Activated naive CD4-positive, alpha-beta T cell treated with anti-CD3 and anti-CD28 coated beads for 36 hours (primary cell): ENCODE measurements at regions of chr1 and their contacts with region 1.

Region 1: DNA sequence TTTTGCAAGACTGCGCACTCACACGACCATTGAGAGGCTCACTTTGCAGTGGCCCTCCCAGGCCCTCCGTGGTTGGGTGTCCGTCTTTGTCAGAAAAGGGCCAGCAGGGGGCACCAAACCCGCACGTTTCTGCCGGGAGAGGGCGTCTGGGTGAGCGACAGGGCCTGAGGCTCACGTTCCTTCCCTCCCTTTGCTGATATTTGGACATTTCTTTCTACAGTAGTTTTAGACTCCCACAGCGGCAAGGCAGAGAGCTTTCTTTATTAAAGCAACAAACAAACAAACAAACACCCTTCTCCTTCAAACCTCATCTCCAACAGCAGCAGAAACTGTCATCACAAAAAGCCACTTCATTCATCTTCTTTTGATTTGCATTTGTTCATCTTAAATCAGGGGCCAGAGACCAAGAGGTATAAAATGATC is 79.2 kb upstream of the WDR26 start:
- DNase-seq: peak; percentile 94
- H3K4me3 Mint-ChIP-seq: no peak overlapping the region
- H3K27ac Mint-ChIP-seq: no peak overlapping the region
- H3K4me1 Mint-ChIP-seq: no peaks in the 10 kb centered on the region
- H3K27me3 Mint-ChIP-seq: no peaks in the 10 kb centered on the region

Region 2: GRCh38 chr1:224392411-224393249 is 121.2 kb before region 1 on chr1:
- CTCF ChIA-PET with region 1: no interaction called
- intact Hi-C with region 1: no loop called
- DNase-seq: no peak
- H3K4me3 Mint-ChIP-seq: no peak overlapping the region
- H3K27ac Mint-ChIP-seq: peak overlapping the region; percentile 51
- H3K4me1 Mint-ChIP-seq: peaks cover 27% of the 10 kb centered on the region
- H3K27me3 Mint-ChIP-seq: no peaks in the 10 kb centered on the region

Region 3: GRCh38 chr1:224503161-224504118 is 10.4 kb before region 1 on chr1:
- CTCF ChIA-PET with region 1: interaction called, 38 read pairs
- intact Hi-C with region 1: no loop called
- DNase-seq: peak; percentile 33
- H3K4me3 Mint-ChIP-seq: no peak overlapping the region
- H3K27ac Mint-ChIP-seq: no peak overlapping the region
- H3K4me1 Mint-ChIP-seq: peaks cover 30% of the 10 kb centered on the region
- H3K27me3 Mint-ChIP-seq: peaks cover 7% of the 10 kb centered on the region

Region 4: GRCh38 chr1:224623743-224624333 is 110.0 kb after region 1 on chr1:
- CTCF ChIA-PET with region 1: interaction called, 3 read pairs
- intact Hi-C with region 1: loop called (anchors 5 kb)
- DNase-seq: peak; percentile 92
- H3K4me3 Mint-ChIP-seq: peak overlapping the region; percentile 46
- H3K27ac Mint-ChIP-seq: peak overlapping the region; percentile 82
- H3K4me1 Mint-ChIP-seq: peaks cover 23% of the 10 kb centered on the region
- H3K27me3 Mint-ChIP-seq: peaks cover 25% of the 10 kb centered on the region

Region 5: DNA sequence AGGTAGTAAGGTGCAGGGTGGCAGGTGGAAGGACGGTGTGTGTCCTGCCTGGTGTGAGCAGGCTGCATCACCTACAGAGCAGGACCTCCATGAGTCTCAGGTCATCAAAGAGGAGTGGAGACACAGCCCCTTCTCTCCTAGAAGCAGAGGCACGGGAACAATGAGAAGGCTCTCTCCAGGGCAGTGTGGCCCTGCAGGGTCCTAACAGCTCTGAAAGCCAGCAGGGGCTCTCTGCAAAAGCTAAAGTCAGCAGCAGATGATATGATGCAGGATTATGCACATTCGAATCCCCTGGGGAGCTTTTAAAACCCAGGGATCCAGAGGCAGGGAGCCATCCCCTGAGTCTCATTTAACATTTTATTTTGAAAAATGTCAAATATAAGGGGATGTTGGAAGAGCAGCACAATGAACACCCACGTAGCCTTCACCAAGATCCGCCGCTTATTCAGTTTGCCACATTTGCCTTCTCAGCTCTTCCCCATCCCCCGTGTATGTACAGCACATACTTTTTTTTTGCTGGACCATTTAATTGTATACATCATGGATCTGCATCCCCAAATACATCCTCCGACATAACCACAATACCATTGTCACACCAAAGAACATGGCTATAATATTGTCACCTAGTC is 190.4 kb after region 1 on chr1:
- CTCF ChIA-PET with region 1: no interaction called
- intact Hi-C with region 1: no loop called
- DNase-seq: no peak
- H3K4me3 Mint-ChIP-seq: no peak overlapping the region
- H3K27ac Mint-ChIP-seq: no peak overlapping the region
- H3K4me1 Mint-ChIP-seq: no peaks in the 10 kb centered on the region
- H3K27me3 Mint-ChIP-seq: no peaks in the 10 kb centered on the region

Region 6: GRCh38 chr1:224851210-224851847 is 337.5 kb after region 1 on chr1:
- CTCF ChIA-PET with region 1: interaction called, 63 read pairs
- intact Hi-C with region 1: loop called (anchors 1 kb)
- DNase-seq: peak; percentile 74
- H3K4me3 Mint-ChIP-seq: no peak overlapping the region
- H3K27ac Mint-ChIP-seq: no peak overlapping the region
- H3K4me1 Mint-ChIP-seq: no peaks in the 10 kb centered on the region
- H3K27me3 Mint-ChIP-seq: peaks cover 6% of the 10 kb centered on the region

Region 7: GRCh38 chr1:225343624-225344023 is 829.8 kb after region 1 on chr1:
- CTCF ChIA-PET with region 1: no interaction called
- intact Hi-C with region 1: loop called (anchors 10 kb)
- DNase-seq: no peak
- H3K4me3 Mint-ChIP-seq: no peak overlapping the region
- H3K27ac Mint-ChIP-seq: no peak overlapping the region
- H3K4me1 Mint-ChIP-seq: no peaks in the 10 kb centered on the region
- H3K27me3 Mint-ChIP-seq: peaks cover 13% of the 10 kb centered on the region